Right ventricle myocardium inferior (tissue), 1 donor: ENCODE measurements at regions of chr19 and their contacts with region 1.

Region 1: GRCh38 chr19:2869618-2870017 is 2.5 kb downstream of the ZNF556 start:
- DNase-seq: no peak
- ATAC-seq: no peak

Region 2: GRCh38 chr19:2648528-2648937 is 221.1 kb before region 1 on chr19:
- intact Hi-C with region 1: loop called (anchors 5 kb)
- DNase-seq: peak; percentile 82
- ATAC-seq: peak; percentile 78